Right ventricle myocardium inferior (tissue), 1 donor: ENCODE measurements at regions of chr12 and their contacts with region 1.

Region 1: DNA sequence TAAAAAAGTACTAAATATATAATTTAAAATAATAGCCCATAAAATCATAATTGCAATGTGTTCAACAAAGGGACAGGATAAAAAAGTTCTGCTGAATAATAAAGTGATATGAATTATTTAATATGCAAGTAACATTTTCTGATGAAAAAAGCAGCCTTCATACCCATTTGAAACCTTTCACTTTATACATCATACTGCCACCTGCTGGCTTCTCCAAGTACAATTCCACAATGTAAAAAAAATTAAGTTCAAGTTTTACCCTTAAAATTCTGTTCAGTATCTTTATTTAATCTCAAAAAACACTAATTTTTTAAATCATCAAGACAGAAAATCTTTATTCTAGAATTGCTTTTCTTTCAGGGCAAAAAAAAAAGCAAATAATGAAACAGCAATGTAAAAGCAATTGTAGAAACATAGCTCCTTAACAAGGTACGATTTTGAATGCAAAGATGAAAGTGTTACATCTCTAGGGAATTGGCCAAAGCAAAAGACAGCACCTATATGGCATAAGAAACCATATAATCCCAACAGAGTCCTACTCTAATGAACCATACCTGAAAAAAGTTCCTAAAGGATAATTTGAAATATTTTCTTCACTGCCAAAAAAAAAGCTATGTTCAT is 15.0 kb downstream of the MDM1 start:
- DNase-seq: no peak
- ATAC-seq: no peak

Region 2: GRCh38 chr12:68040450-68041075 is 276.6 kb before region 1 on chr12:
- intact Hi-C with region 1: loop called (anchors 10 kb)
- DNase-seq: no peak
- ATAC-seq: peak; percentile 67

Region 3: GRCh38 chr12:68223083-68223747 is 93.9 kb before region 1 on chr12:
- intact Hi-C with region 1: loop called (anchors 1 kb)
- DNase-seq: peak; percentile 73
- ATAC-seq: peak; percentile 98